Mammary epithelial cell (primary cell): ENCODE measurements at regions of chr7 and their contacts with region 1.

Region 1: GRCh38 chr7:140525743-140526142 is 46.4 kb upstream of the MKRN1 start:
- DNase-seq: peak; percentile 83
- H3K4me3 ChIP-seq: no peak overlapping the region
- H3K27ac ChIP-seq: no peak overlapping the region
- H3K4me1 ChIP-seq: peaks cover 11% of the 10 kb centered on the region
- H3K27me3 ChIP-seq: peaks cover 3% of the 10 kb centered on the region
- CTCF ChIP-seq: no peak

Region 2: DNA sequence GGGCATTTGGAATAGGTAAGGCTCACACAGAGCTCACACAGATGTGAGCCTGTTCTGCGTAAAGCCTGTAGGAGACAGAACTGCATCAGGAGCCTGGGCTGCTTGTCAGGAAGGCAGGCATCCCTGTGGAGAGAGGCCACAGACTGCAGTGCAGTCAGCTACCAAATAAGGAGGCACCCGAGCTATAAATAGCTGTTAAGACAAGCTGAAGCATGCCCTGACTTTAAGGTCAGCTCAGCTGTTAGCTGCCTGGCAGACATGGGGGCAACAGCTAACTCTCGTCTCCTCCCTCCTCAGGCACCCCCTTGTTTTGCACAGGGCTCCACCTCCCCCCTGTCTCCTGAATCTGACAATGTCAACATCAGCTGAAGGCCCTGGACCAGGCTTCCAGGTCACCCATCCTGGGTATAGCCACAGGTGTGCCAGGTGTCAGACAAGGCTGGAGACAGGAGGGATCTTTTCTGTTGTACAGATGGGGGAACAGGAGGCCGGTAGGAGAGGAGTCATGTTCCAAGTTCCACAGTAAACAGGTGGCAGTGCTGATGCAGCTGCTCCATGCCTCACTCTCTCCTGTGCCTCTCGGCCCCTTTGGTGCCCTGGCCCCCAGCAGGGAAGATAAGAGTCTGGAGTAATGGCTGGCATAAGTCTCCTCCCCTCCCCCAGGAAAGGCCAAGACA is 18.8 kb before region 1 on chr7:
- CTCF ChIA-PET with region 1: interaction called, 15 read pairs
- dilution Hi-C with region 1: no loop called
- in situ Hi-C with region 1: no loop called
- intact Hi-C with region 1: no loop called
- DNase-seq: peak; percentile 53
- H3K4me3 ChIP-seq: no peak overlapping the region
- H3K27ac ChIP-seq: no peak overlapping the region
- H3K4me1 ChIP-seq: peaks cover 9% of the 10 kb centered on the region
- H3K27me3 ChIP-seq: no peaks in the 10 kb centered on the region
- CTCF ChIP-seq: peak in 1 of 2 donors; percentile 38

Region 3: DNA sequence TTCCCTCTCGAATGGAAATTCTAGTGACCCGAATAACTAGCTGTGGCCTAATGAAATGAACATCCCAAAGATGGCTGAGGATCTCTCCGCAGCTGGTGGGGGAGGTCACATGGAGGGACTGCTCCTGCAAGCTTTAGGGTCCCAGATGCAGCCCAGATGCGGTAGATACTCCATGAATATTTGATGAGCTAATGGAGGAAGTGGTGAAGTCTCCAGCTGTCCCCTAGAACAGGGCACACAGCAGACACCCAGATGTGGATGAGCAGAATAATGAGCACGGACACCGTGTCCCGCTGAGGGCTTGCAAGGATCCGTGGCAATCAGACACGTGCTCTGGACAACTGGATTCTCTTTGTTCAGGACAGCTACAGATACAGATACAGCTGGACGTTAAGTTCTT is 55.7 kb after region 1 on chr7:
- CTCF ChIA-PET with region 1: no interaction called
- dilution Hi-C with region 1: no loop called
- in situ Hi-C with region 1: no loop called
- intact Hi-C with region 1: no loop called
- DNase-seq: no peak
- H3K4me3 ChIP-seq: no peak overlapping the region
- H3K27ac ChIP-seq: no peak overlapping the region
- H3K4me1 ChIP-seq: no peaks in the 10 kb centered on the region
- H3K27me3 ChIP-seq: peaks cover 3% of the 10 kb centered on the region
- CTCF ChIP-seq: no peak